GM23248 (cell line): ENCODE measurements at regions of chr10 and their contacts with region 1.

Region 1: GRCh38 chr10:118712930-118713634 is 41.7 kb downstream of the CACUL1 start:
- DNase-seq: no peak
- H3K4me3 ChIP-seq: no peak overlapping the region
- H3K27ac ChIP-seq: no peak overlapping the region
- H3K4me1 ChIP-seq: no peaks in the 10 kb centered on the region
- H3K27me3 ChIP-seq: no peaks in the 10 kb centered on the region

Region 2: GRCh38 chr10:118571123-118571522 is 142.0 kb before region 1 on chr10:
- in situ Hi-C with region 1: loop called (anchors 10 kb)
- DNase-seq: peak; percentile 44
- H3K4me3 ChIP-seq: no peak overlapping the region
- H3K27ac ChIP-seq: no peak overlapping the region
- H3K4me1 ChIP-seq: peaks cover 8% of the 10 kb centered on the region; the same call in 1 of the 2 replicates
- H3K27me3 ChIP-seq: peaks cover 10% of the 10 kb centered on the region; the same call in 1 of the 2 replicates

Region 3: GRCh38 chr10:118800920-118801319 is 87.8 kb after region 1 on chr10:
- in situ Hi-C with region 1: no loop called
- DNase-seq: peak; percentile 26
- H3K4me3 ChIP-seq: no peak overlapping the region
- H3K27ac ChIP-seq: no peak overlapping the region
- H3K4me1 ChIP-seq: peaks cover 9% of the 10 kb centered on the region
- H3K27me3 ChIP-seq: peaks cover 6% of the 10 kb centered on the region